Ascending aorta (tissue), 2 donors: ENCODE measurements at regions of chr11 and their contacts with region 1.

Region 1: GRCh38 chr11:14544611-14545010 is 24.4 kb upstream of the PSMA1 start:
- DNase-seq: no peak
- H3K4me3 ChIP-seq: no peak overlapping the region
- H3K27ac ChIP-seq: peak overlapping the region in 1 of 2 donors; percentile 10
- H3K4me1 ChIP-seq: peaks cover 0 to 17% of the 10 kb centered on the region in 2 donors
- H3K27me3 ChIP-seq: no peaks in the 10 kb centered on the region
- CTCF ChIP-seq: no peak

Region 2: DNA sequence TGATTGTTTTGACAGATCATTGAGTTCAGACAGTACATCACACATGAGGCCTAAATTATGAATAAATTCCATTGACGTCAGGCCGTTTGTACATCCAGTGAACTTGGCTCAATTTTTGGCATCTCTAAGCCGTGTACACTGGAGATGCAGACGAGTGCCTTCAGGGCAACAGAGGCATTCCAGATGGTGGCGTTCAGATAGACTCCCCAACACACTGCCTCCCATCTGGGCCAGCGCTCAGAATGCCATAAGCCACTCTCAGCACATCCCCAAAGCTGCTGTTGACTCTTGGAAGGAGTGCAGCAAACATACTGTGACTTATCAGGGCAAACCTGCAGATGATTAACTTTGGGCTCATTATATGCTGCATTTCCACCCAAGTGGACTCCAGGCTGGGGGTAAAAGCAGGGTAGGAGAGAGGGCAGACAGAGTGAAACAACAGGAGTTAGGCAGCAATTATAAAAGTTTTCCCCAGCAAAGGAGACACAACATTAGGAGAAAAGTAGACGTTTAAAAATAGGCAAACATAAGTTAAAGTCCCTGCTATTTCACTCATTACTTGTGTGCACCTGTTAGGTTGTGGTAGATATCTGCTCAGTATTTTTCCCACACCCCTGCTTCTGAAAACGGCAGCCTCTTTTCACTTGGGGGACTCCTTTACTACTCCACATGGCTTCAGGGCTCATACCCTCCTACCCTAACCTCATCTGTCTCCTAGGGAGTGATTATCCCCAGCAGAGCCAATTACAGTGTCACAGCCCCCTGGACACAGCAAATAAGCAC is 38.8 kb after region 1 on chr11:
- intact Hi-C with region 1: loop called (anchors 5 kb)
- DNase-seq: peak in 1 of 2 donors; percentile 65
- H3K4me3 ChIP-seq: no peak overlapping the region
- H3K27ac ChIP-seq: peak overlapping the region; percentile 40 to 54
- H3K4me1 ChIP-seq: no peaks in the 10 kb centered on the region
- H3K27me3 ChIP-seq: no peaks in the 10 kb centered on the region
- CTCF ChIP-seq: no peak

Region 3: DNA sequence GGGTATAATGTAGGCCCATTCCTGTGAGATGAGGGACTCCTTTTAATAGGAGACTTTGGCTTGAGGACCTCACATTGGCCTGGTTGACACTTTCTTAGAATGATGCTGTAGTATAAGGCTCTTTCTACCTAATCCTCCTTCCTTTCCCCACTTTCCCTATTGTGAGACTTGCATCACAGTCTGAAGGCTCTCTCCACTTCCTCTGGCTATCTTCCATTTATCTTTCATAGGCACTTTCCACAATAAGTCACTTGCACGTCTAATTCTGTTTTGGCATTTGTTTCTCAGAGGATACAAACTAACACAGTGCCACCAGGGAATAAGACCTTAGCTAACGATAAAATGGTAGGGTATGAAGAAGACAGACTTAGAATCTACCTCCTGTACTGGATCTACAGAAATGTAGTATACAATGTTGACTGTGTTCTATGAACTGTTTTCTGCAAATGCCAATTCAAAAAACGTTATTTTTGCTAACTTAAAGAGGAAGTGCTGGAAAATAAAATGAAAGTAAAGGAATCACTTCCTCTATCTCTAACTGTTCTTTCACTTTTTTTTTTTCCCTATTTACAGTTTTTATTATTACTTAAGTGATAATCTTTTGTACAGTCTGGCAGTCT is 81.1 kb after region 1 on chr11:
- intact Hi-C with region 1: no loop called
- DNase-seq: no peak
- H3K4me3 ChIP-seq: no peak overlapping the region
- H3K27ac ChIP-seq: no peak overlapping the region
- H3K4me1 ChIP-seq: no peaks in the 10 kb centered on the region
- H3K27me3 ChIP-seq: no peaks in the 10 kb centered on the region
- CTCF ChIP-seq: no peak